ENCODE measurements at regions of chr1 and their contacts with region 1.

Region 1: DNA sequence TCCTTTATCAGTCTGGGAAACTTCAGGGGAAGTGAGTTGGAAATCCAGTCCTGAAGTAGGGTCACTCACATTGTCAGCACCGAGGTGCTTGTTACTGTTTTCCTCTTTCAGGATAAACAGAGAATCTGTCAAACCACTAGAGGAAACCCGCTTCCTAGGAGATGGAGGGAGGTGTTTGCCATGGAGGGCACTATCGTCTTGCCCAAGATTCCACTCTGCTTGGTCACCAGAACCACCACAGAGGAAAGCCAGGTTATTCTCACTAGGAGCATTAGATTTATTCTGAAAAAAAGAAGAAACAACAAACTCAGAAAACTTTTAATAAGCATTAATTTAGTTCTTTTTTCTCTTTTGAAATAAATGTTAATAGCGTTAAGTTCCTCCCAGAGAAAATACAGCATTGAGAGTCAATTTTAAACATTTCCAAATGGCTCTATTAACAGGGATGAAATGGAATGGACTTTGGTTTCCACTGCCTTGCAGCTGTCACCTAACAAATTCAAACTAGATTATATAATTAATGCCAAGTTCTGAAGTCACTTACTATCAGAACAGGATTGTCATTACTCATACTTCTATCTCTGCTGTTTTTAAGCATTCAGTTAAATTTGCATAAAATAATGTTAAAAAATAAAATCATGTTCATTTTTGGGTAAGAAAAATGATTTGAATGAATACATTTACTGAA is 242.8 kb downstream of the CRB1 start:
- DNase-seq: no peak
- ATAC-seq: no peak
- H3K4me3 ChIP-seq: no peak overlapping the region
- H3K4me3 Mint-ChIP-seq: no peak overlapping the region
- H3K27ac ChIP-seq: no peak overlapping the region
- H3K27ac Mint-ChIP-seq: no peak overlapping the region
- H3K4me1 ChIP-seq: no peaks in the 10 kb centered on the region
- H3K4me1 Mint-ChIP-seq: no peaks in the 10 kb centered on the region
- H3K27me3 ChIP-seq: no peaks in the 10 kb centered on the region
- H3K27me3 Mint-ChIP-seq: no peaks in the 10 kb centered on the region

Region 2: DNA sequence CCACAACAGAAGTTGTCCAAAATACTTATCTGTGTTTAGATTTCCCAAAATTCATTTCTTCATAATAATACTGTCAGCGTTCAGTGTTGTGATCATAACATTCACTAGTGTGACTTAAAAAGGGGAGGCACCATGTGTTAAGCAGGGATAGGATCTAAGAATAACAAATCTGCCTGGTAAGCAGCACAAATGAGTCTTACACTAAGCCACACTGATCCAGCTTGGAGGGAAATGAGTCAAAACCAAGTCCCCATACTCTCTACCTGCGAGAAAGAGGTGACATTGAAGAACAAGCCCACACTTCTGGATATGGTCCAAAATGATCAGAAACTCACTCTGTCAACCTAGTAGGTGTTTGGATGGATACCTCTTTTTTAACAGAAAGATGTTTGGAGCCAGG is 97.3 kb before region 1 on chr1:
- CTCF ChIA-PET with region 1: no interaction called
- POLR2A ChIA-PET with region 1: no interaction called
- intact Hi-C with region 1: loop called in 1 of 2 experiments (anchors 5 kb)
- DNase-seq: no peak
- ATAC-seq: no peak
- H3K4me3 ChIP-seq: no peak overlapping the region
- H3K4me3 Mint-ChIP-seq: no peak overlapping the region
- H3K27ac ChIP-seq: no peak overlapping the region
- H3K27ac Mint-ChIP-seq: no peak overlapping the region
- H3K4me1 ChIP-seq: no peaks in the 10 kb centered on the region
- H3K4me1 Mint-ChIP-seq: peaks cover 0 to 14% (median 5%) of the 10 kb centered on the region in 7 donors
- H3K27me3 ChIP-seq: no peaks in the 10 kb centered on the region
- H3K27me3 Mint-ChIP-seq: peaks cover 0 to 13% (median 7%) of the 10 kb centered on the region in 5 donors